Thyroid gland (tissue), 4 donors: ENCODE measurements at regions of chr11 and their contacts with region 1.

Region 1: DNA sequence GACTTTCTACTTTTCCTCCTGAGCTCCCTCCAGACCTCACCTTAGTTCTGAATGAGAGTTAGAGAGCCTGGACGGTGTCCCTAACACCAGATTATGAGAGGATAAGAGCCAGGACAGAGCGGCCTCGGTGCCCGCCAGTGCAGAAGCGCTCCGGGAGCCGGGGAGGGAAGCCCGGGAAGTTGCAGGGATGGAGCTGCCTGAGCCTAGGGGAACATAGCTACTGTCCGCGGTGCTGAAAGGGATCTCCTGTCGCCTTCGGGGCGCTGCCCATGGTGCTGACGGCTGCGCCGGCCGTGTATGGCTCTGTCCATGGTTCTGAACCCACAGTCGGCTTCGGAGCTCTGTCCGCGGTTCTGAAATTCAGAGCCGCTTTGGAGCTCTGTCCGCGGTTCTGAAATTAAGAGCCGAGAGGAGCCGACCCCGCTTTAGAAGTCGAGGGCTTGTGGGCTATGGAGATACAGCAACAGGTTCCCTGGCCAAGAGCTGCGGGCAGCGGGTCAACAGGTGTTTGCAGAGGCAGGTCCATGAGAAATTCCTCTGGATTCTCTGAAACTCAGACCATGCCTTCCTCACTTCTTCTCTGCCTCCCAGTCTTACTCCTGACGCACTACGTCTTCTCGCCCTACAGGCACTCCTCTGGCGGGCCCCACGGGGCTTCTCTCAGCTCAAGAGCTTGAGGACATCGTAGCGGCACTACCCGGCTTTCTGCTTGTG is 814 bp downstream of the NPAS4 start:
- DNase-seq: peak; percentile 93 to 94
- H3K4me3 ChIP-seq: no peak overlapping the region
- H3K27ac ChIP-seq: no peak overlapping the region
- H3K4me1 ChIP-seq: peaks cover 0 to 29% of the 10 kb centered on the region in 2 donors
- H3K27me3 ChIP-seq: no peaks in the 10 kb centered on the region
- CTCF ChIP-seq: peak in 1 of 6 experiments; percentile 13
- POLR2A ChIP-seq: no peak

Region 2: GRCh38 chr11:66242095-66242765 is 179.4 kb before region 1 on chr11:
- intact Hi-C with region 1: no loop called
- DNase-seq: no peak
- H3K4me3 ChIP-seq: no peak overlapping the region
- H3K27ac ChIP-seq: no peak overlapping the region
- H3K4me1 ChIP-seq: no peaks in the 10 kb centered on the region
- H3K27me3 ChIP-seq: no peaks in the 10 kb centered on the region
- CTCF ChIP-seq: no peak
- POLR2A ChIP-seq: no peak

Region 3: GRCh38 chr11:66288671-66289547 is 132.7 kb before region 1 on chr11 and contains the start of gene YIF1A:
- intact Hi-C with region 1: loop called (anchors 5 kb)
- DNase-seq: peak; percentile 99
- H3K4me3 ChIP-seq: peak within 1 kb of the TSS; percentile 70 to 93 (median 71)
- H3K27ac ChIP-seq: peak within 1 kb of the TSS; percentile 74 to 88 (median 74)
- H3K4me1 ChIP-seq: peaks cover 22% of the 10 kb centered on the region in 2 donors
- H3K27me3 ChIP-seq: peaks cover 4% of the 10 kb centered on the region
- CTCF ChIP-seq: no peak
- POLR2A ChIP-seq: peak in 1 of 2 donors; percentile 94
- total RNA-seq, gene YIF1A: 77.7 to 168 (median 118) TPM

Region 4: DNA sequence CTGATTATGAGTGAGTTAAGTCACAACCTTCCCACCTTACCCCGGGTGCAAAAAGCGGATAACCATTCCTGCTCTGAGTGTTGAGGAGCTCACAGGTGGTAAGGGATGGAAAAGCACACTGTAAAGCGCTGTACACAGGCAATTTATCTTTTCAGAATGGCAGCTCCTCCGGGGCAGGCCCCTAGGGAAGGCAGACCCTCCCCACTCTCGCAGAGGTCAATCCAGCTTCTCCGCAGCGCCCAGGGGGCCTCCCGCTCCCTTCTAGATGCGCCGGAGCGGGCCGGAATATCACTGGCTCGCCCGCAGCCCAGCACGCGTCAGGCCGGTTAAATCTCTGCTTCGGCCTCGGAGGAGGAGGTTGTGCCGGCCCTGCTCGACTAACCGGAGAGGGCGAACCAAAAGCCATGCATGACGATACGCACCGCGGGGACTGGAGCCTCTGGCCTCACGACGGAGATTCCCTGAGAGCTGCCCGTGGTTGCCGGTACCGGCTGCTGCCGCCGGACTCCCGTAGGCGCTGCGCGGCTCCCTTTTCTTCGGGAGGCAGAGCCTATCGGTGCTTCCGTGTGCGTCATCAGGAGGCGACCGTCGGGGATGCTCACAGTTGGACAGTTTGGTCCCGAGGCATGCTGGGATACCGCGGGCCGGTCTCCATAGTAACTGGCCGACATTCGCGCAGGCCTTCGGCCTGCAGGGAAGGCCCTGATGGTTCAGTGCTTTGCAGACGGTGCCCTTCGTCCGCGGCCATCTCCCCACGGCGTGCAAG is 76.9 kb before region 1 on chr11 and contains the start of gene BRMS1:
- intact Hi-C with region 1: no loop called
- DNase-seq: peak; percentile 98 to 99
- H3K4me3 ChIP-seq: peak within 1 kb of the TSS; percentile 81 to 92 (median 90)
- H3K27ac ChIP-seq: peak within 1 kb of the TSS; percentile 61 to 81 (median 64)
- H3K4me1 ChIP-seq: peaks cover 27 to 30% of the 10 kb centered on the region in 2 donors
- H3K27me3 ChIP-seq: no peaks in the 10 kb centered on the region
- CTCF ChIP-seq: peak in 4 of 6 experiments; percentile 14 to 43 (median 28)
- POLR2A ChIP-seq: peak in 1 of 2 donors; percentile 80
- total RNA-seq, gene BRMS1: 41.4 to 64.4 (median 53.8) TPM

Region 5: DNA sequence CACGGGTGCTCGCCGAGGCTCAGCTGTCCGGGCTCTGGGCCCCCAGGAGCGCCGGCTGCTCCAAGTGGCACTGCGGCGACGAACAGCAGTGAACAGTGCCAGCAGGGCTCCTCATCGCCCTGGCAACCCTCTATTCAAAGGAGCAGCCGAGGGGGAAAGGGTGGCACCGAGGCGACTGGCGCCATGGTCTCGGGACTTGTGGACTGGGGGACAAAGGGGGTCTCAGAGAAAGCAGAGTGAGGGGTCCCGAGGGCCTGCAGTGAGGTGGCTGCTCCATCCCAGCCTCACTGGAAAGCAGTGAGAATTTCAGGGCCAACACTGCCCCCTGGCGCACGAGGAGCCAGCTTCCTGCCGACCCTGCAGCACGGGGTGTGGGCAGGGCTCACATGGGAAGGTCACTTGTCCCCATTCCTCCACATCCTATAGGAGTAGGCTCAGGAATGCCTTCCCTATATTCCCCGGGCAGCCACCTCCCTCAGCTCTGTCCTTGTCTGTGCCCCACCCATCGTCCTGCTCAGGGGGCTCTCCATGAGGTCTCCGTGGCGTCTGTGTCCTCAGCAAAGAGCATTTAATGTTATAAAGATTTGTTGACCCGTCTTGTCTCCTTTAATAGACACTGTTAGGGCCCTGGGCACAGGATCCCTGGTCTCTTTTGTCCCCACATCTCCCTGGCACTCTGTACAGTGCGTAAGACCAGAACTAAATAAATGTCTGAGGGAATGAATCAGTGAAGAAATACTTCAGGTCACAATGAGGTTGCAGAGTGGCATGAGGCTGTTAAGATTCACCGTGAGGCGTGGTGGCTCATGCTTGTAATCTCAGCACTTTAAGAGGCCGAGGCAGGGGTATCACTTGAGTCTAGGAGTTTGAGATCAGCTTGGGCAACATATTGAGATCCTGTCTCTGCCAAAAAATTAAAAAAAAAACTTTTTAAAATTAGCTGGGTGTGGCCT is 461.6 kb after region 1 on chr11:
- intact Hi-C with region 1: no loop called
- DNase-seq: peak; percentile 76 to 81
- H3K4me3 ChIP-seq: no peak overlapping the region
- H3K27ac ChIP-seq: peak overlapping the region in 2 of 3 donors; percentile 14 to 75
- H3K4me1 ChIP-seq: peaks cover 9 to 25% of the 10 kb centered on the region in 2 donors
- H3K27me3 ChIP-seq: no peaks in the 10 kb centered on the region
- CTCF ChIP-seq: peak in 5 of 6 experiments; percentile 29 to 73 (median 69)
- POLR2A ChIP-seq: no peak